ENCODE measurements at regions of chr12 and their contacts with region 1.

Region 1: DNA sequence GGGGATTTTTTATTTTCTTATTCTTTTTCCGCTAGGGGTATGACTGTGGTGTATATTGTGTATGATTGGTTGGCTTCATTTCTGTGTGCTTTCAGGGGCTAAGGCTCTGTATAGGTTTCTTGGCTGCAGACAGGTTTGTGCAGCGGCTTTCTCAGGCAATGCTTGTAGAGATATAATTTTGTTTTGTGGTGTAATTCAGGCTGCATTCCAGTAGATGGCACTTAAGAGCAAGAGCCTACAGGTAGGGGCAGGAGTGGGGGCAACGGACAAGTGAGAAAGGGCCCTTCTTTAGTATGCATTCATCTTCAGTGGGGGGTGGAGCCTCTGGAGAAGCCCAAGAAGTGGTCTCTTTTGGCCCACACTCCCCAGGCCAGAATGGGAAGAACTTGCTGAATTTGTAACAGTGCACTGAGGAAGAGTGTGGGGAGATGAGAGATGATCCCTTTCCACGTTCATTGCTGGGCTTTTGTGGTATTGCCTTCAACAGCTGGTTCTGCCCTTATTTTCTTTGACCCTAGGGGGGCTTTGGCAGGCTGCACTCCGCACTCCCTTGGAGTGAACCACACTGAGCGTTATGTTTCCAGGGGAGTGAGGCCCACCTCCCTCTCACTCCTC is 78.6 kb downstream of the IFNG-AS1 start:
- DNase-seq: peak in 2 of 9 experiments; percentile 10 to 20
- ATAC-seq: no peak
- H3K4me3 ChIP-seq: no peak overlapping the region
- H3K4me3 Mint-ChIP-seq: no peak overlapping the region
- H3K27ac ChIP-seq: no peak overlapping the region
- H3K27ac Mint-ChIP-seq: no peak overlapping the region
- H3K4me1 ChIP-seq: no peaks in the 10 kb centered on the region
- H3K4me1 Mint-ChIP-seq: peaks cover 11% of the 10 kb centered on the region
- H3K27me3 ChIP-seq: no peaks in the 10 kb centered on the region
- H3K27me3 Mint-ChIP-seq: no peaks in the 10 kb centered on the region
- CTCF ChIP-seq: no peak

Region 2: DNA sequence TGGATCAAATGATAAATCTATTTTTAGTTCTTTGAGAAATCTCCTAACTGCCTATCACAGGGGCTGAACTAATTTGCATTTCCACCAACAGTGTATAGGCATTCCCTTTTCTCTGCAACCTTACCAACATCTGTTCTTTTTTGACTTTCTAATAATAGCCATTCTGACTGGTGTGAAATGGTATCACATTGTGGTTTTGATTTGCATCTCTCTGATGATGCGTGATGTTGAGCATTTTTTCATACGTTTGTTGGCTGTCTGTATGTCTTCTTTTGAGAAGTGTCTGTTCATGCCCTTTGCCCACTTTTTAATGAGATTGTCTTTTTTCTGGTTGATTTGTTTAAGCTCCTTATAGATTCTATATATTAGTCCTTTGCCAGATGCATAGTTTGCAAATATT is 11.6 kb before region 1 on chr12:
- CTCF ChIA-PET with region 1: no interaction called
- POLR2A ChIA-PET with region 1: no interaction called
- intact Hi-C with region 1: loop called in 1 of 2 experiments (anchors 1 kb)
- DNase-seq: no peak
- ATAC-seq: no peak
- H3K4me3 ChIP-seq: no peak overlapping the region
- H3K4me3 Mint-ChIP-seq: no peak overlapping the region
- H3K27ac ChIP-seq: no peak overlapping the region
- H3K27ac Mint-ChIP-seq: no peak overlapping the region
- H3K4me1 ChIP-seq: no peaks in the 10 kb centered on the region
- H3K4me1 Mint-ChIP-seq: no peaks in the 10 kb centered on the region
- H3K27me3 ChIP-seq: no peaks in the 10 kb centered on the region
- H3K27me3 Mint-ChIP-seq: no peaks in the 10 kb centered on the region
- CTCF ChIP-seq: no peak

Region 3: GRCh38 chr12:68119724-68120211 is 51.9 kb after region 1 on chr12:
- CTCF ChIA-PET with region 1: no interaction called
- POLR2A ChIA-PET with region 1: no interaction called
- intact Hi-C with region 1: no loop called
- DNase-seq: peak in 6 of 9 experiments; percentile 31 to 77 (median 62)
- ATAC-seq: peak; percentile 77
- H3K4me3 ChIP-seq: peak overlapping the region in 1 of 2 experiments; percentile 1
- H3K4me3 Mint-ChIP-seq: no peak overlapping the region
- H3K27ac ChIP-seq: peak overlapping the region in 1 of 2 experiments; percentile 73
- H3K27ac Mint-ChIP-seq: peak overlapping the region; percentile 69
- H3K4me1 ChIP-seq: peaks cover 12% of the 10 kb centered on the region
- H3K4me1 Mint-ChIP-seq: peaks cover 34% of the 10 kb centered on the region
- H3K27me3 ChIP-seq: no peaks in the 10 kb centered on the region
- H3K27me3 Mint-ChIP-seq: no peaks in the 10 kb centered on the region
- CTCF ChIP-seq: no peak